ENCODE measurements at regions of chr4 and their contacts with region 1.

Region 1: GRCh38 chr4:48340965-48341775 is at the start of gene SLAIN2:
- DNase-seq: peak; percentile 99
- H3K4me3 ChIP-seq: peak within 1 kb of the TSS; percentile 76 to 94 (median 87)
- H3K27ac ChIP-seq: peak within 1 kb of the TSS; percentile 94 to 99 (median 98)
- H3K4me1 ChIP-seq: peaks cover 28 to 56% (median 50%) of the 10 kb centered on the region in 4 donors
- H3K27me3 ChIP-seq: no peaks in the 10 kb centered on the region
- CTCF ChIP-seq: peak in 2 of 3 experiments; percentile 12 to 49
- EP300 ChIP-seq: no peak
- POLR2A ChIP-seq: peak; percentile 58
- total RNA-seq, gene SLAIN2: 82.5 to 165 (median 111) TPM

Region 2: DNA sequence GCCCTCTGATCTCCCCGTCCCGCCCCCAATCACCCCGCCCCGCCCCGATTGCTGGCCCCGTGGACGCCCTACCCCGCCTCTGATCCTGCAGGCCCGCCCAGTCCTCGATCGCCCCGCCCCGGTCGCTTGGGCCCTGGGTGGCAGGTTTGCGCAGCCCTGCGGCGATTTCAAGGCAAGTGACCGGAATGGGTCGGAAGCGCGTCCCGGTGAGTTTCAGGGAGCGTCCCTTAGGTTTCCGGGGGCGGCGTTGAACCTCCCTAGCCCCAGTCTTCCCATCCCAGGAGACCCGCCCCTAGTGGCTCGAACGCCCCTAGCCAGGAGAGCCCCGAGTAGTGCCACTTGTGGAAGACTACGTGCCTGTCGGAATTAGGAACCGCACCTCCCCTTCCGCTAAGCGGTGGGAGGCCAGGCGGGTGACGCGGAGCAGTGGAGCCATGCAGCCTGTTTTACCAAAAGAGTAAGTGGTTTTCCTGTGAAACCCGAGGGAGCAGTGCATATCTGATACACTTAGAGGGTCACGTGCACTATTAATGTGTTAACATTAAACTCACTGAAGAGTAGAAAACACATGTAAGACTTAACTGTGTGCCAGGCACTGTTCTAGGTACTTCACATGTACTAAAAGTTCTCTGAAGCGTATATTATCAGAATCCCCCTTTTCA is 71.2 kb before region 1 on chr4:
- intact Hi-C with region 1: loop called (anchors 5 kb)
- DNase-seq: peak; percentile 97
- H3K4me3 ChIP-seq: peak overlapping the region; percentile 79 to 99 (median 86)
- H3K27ac ChIP-seq: peak overlapping the region; percentile 75 to 86 (median 82)
- H3K4me1 ChIP-seq: peaks cover 11 to 14% (median 11%) of the 10 kb centered on the region in 4 donors
- H3K27me3 ChIP-seq: no peaks in the 10 kb centered on the region
- CTCF ChIP-seq: peak in 2 of 3 experiments; percentile 12 to 18
- EP300 ChIP-seq: no peak
- POLR2A ChIP-seq: no peak

Region 3: GRCh38 chr4:48830706-48831531 is 489.7 kb after region 1 on chr4 and contains the start of gene OCIAD1:
- intact Hi-C with region 1: loop called (anchors 10 kb)
- DNase-seq: peak; percentile 98
- H3K4me3 ChIP-seq: peak within 1 kb of the TSS; percentile 79 to 96 (median 86)
- H3K27ac ChIP-seq: peak within 1 kb of the TSS; percentile 91 to 93 (median 91)
- H3K4me1 ChIP-seq: peaks cover 16 to 32% (median 22%) of the 10 kb centered on the region in 4 donors
- H3K27me3 ChIP-seq: peaks cover 0 to 2% (median 0%) of the 10 kb centered on the region in 4 donors
- CTCF ChIP-seq: no peak
- EP300 ChIP-seq: no peak
- POLR2A ChIP-seq: no peak
- total RNA-seq, gene OCIAD1: 73.7 to 95.8 (median 78.9) TPM